K562 (cell line): ENCODE measurements at regions of chr5 and their contacts with region 1.

Region 1: DNA sequence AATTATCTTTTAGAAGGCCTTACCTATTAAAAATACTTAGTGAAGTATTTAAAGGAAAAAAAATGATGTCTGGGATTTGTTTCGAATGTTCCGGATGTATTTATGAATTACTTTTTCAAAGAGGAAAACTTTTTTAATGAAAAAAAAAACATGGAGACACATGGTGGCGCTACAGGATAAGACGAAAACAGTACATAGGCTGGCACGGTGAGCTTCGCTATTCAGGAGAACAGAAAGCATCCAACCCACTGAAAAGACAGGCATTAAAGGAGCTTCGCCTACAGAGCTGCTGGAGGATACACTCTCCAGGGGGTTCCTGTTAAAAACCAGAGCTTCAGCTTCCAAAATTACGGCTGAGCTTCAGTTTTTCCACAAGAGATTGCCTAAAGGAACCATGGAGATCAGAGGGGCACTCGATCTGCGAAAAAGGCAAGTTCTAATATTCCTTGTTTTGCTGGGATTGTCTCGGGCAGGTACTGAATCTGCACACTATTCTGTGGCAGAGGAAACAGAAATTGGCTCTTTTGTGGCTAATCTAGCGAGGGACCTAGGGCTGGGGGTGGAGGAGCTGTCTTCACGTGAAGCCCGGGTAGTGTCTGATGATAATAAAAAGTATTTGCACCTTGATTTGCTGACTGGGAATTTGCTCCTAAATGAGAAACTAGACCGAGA is at the start of gene PCDHB14:
- DNase-seq: peak in 3 of 4 experiments; percentile 8 to 30 (median 18)
- ATAC-seq: peak; percentile 77
- H3K4me3 ChIP-seq: no peak within 1 kb of the TSS
- H3K27ac ChIP-seq: no peak within 1 kb of the TSS
- H3K4me1 ChIP-seq: no peaks in the 10 kb centered on the region
- H3K27me3 ChIP-seq: peaks cover 0 to 6% of the 10 kb centered on the region in 2 experiments; a peak in 2 of 5 replicates
- CTCF ChIP-seq: peak; percentile 34 to 64 (median 52); a peak in 5 of 6 replicates
- EP300 ChIP-seq: no peak
- POLR2A ChIP-seq: no peak
- RAD21 ChIP-seq: no peak; a peak in 1 of 4 replicates
- polyA plus RNA-seq, gene PCDHB14: not detected

Region 2: GRCh38 chr5:141320225-141321169 is 97.2 kb after region 1 on chr5 and contains the start of gene TAF7:
- CTCF ChIA-PET with region 1: no interaction called
- POLR2A ChIA-PET with region 1: interaction called, 3 read pairs
- in situ Hi-C with region 1: no loop called
- intact Hi-C with region 1: loop called (anchors 10 kb)
- DNase-seq: peak; percentile 95 to 98 (median 96)
- ATAC-seq: peak; percentile 98
- H3K4me3 ChIP-seq: peak within 1 kb of the TSS; percentile 70
- H3K27ac ChIP-seq: peak within 1 kb of the TSS; percentile 92
- H3K4me1 ChIP-seq: peaks cover 0 to 9% of the 10 kb centered on the region in 2 experiments; a peak in 1 of 5 replicates
- H3K27me3 ChIP-seq: no peaks in the 10 kb centered on the region
- CTCF ChIP-seq: peak; percentile 80 to 95 (median 93)
- EP300 ChIP-seq: no peak
- POLR2A ChIP-seq: peak; percentile 97
- RAD21 ChIP-seq: peak in 1 of 2 experiments; percentile 39; a peak in 2 of 4 replicates
- polyA plus RNA-seq, gene TAF7: 51.6 to 68.8 TPM